Common myeloid progenitor, CD34-positive (primary cell): ENCODE measurements at regions of chr6 and their contacts with region 1.

Region 1: DNA sequence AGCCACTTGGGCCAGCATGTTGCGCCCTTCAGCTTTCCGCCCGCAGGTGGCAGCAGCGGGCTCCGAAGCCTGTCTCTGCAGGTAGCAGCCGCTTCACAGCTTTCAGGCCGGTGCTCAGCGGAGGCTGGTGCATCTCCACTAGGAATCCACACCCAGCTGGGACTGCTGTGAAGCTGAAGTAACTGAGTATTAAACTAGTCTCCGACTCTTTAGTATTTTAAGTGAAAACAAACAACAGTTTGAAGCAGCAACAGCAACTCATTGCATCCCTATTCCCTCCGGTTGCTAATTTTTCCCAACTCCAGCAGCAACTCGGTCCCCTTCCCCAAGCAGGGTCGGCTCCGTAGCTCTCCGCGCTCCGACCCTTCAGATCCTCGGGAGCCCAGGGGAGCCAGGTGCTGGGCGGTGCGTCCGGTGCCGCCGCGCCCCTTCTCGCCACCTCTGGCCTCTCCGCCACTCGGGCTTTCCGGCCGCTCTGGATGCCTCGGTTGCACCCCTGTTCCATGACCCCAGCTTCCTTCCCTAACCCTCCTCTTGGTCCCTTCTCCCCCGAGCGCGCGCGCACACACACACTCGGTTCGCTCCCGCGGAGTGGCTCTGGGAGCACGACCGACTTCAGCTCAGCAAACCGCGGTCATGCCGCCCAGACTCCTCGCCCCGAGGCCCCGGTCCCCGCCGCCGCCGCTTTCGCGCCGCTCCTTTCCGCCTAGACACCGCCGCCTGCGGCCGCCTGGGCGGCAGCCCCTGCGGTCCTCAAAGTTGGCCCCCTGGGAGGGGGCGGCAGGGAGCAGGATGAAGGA is 768 bp upstream of the NKAIN2 start:
- DNase-seq: peak; percentile 84 to 92 (median 89)
- H3K4me3 ChIP-seq: peak overlapping the region; percentile 75 to 94 (median 91)
- H3K27ac ChIP-seq: peak overlapping the region in 1 of 2 experiments; percentile 62
- H3K4me1 ChIP-seq: peaks cover 9 to 42% (median 23%) of the 10 kb centered on the region in 4 experiments
- H3K27me3 ChIP-seq: no peaks in the 10 kb centered on the region

Region 2: GRCh38 chr6:123777563-123777962 is 25.3 kb before region 1 on chr6:
- CTCF ChIA-PET with region 1: interaction called, 14 read pairs
- POLR2A ChIA-PET with region 1: no interaction called
- DNase-seq: peak; percentile 57 to 76 (median 71)
- H3K4me3 ChIP-seq: no peak overlapping the region
- H3K27ac ChIP-seq: no peak overlapping the region
- H3K4me1 ChIP-seq: no peaks in the 10 kb centered on the region
- H3K27me3 ChIP-seq: no peaks in the 10 kb centered on the region

Region 3: DNA sequence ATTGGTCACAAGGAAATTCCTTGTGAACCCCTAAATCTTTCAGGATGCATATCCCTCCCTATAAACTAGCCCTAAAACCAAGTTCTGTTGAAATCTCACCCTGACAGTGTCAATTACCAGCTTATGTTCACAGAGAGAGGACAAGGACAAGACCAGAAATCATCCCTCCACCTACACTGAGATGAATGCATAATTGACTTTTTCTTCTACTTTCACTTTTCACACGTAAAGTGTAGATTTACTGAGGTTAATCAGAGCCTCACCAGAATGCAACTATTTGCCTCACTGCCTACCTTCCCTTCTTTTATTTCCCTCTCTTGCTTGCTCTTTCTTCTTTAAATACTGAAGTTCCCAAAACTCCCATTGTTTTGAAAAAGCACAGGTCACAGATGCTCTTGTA is 14.6 kb before region 1 on chr6:
- CTCF ChIA-PET with region 1: interaction called, 19 read pairs
- POLR2A ChIA-PET with region 1: interaction called, 3 read pairs
- DNase-seq: no peak
- H3K4me3 ChIP-seq: peak overlapping the region in 2 of 7 experiments; percentile 27 to 63
- H3K27ac ChIP-seq: no peak overlapping the region
- H3K4me1 ChIP-seq: peaks cover 0 to 5% (median 0%) of the 10 kb centered on the region in 4 experiments
- H3K27me3 ChIP-seq: no peaks in the 10 kb centered on the region

Region 4: GRCh38 chr6:123888771-123889513 is 86.0 kb after region 1 on chr6:
- CTCF ChIA-PET with region 1: interaction called, 13 read pairs
- POLR2A ChIA-PET with region 1: no interaction called
- DNase-seq: peak; percentile 34 to 82 (median 64)
- H3K4me3 ChIP-seq: peak overlapping the region in 2 of 7 experiments; percentile 22 to 52
- H3K27ac ChIP-seq: peak overlapping the region; percentile 13 to 72
- H3K4me1 ChIP-seq: peaks cover 0 to 24% (median 13%) of the 10 kb centered on the region in 4 experiments
- H3K27me3 ChIP-seq: no peaks in the 10 kb centered on the region

Region 5: DNA sequence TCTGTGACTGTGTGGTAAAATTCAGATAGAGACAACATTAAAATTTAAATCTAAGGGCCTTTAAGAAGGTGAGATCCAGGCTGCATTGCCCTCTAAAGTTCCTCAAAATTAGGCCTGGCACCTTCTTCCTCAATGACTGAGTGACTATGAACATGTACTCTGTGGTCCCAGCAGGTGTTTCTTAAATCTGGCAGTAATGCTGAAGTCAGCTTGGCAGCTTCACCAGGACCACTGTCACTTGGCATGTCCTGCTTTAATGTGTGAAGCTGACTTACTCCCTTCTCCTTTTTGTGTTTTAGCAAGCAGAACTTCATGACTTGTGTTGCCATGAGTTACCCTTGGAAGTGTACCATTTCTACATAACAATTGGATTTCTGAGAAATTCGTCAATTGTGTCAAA is 142.5 kb after region 1 on chr6:
- CTCF ChIA-PET with region 1: interaction called, 10 read pairs
- POLR2A ChIA-PET with region 1: interaction called, 4 read pairs
- DNase-seq: peak in 2 of 3 donors; percentile 81 to 90
- H3K4me3 ChIP-seq: no peak overlapping the region
- H3K27ac ChIP-seq: no peak overlapping the region
- H3K4me1 ChIP-seq: peaks cover 0 to 15% (median 5%) of the 10 kb centered on the region in 4 experiments
- H3K27me3 ChIP-seq: no peaks in the 10 kb centered on the region

Region 6: DNA sequence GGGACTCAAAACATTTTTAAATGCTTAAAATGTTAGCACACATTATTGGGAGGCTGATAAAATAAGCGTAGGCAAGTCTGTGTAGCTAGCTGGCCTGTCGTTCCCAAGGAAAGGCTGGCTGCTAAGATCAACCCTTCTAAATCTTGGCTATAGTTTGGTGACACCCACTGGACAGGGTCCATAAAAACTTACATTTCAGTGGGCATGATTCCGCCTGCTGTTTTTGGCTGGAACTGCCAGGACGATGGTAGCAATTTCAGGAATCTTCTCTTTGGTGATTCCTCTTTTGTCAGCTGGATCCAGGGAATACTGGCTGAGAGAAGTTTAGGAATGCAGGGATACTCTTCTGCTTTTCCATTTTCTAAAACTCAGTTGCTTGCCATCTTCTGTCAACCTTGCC is 163.0 kb after region 1 on chr6:
- CTCF ChIA-PET with region 1: interaction called, 124 read pairs
- POLR2A ChIA-PET with region 1: interaction called, 3 read pairs
- DNase-seq: peak; percentile 70 to 77 (median 76)
- H3K4me3 ChIP-seq: no peak overlapping the region
- H3K27ac ChIP-seq: no peak overlapping the region
- H3K4me1 ChIP-seq: peaks cover under 1 to 32% (median 13%) of the 10 kb centered on the region in 4 experiments
- H3K27me3 ChIP-seq: no peaks in the 10 kb centered on the region